Heart right ventricle (tissue), 16 donors: ENCODE measurements at regions of chr16 and their contacts with region 1.

Region 1: DNA sequence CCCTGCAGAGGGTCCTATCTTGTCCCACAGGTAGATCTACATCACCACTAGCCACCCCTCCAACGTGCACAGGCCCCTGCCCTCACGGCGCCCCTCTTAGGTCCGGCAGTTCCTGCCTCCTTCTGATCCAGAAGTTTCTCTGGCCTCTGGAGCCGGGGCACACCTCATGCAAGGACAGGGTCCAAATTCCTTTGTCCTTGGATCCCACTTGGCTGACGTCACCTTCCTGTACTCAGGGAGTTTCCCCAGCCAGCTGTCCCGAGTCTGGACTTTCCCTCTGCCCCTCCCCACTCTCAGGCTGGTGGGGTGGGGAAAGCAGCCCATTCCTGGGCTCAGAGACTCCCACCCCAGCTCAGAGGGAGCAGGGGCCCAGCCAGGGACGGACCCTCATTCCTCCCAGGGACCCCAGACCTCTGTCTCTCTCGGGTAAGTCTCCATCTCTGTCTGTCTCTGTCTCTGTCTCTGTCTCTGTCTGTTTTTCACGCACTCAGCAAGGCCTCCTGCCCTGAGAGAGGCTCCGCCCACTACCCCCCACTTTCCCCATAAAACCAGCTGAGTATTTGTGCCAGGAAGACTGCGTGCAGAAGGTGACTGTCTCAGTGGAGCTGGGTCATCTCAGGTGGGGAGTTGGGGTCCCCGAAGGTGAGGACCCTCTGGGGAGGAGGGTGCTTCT is at the start of gene IL32:
- DNase-seq: peak; percentile 54 to 88
- ATAC-seq: peak; percentile 70 to 94 (median 91)
- H3K4me3 ChIP-seq: peak within 1 kb of the TSS; percentile 1 to 71 (median 62)
- H3K27ac ChIP-seq: peak within 1 kb of the TSS; percentile 81 to 94 (median 88)
- H3K4me1 ChIP-seq: peaks cover 3 to 52% (median 14%) of the 10 kb centered on the region in 9 donors
- H3K27me3 ChIP-seq: no peaks in the 10 kb centered on the region
- CTCF ChIP-seq: no peak
- total RNA-seq, gene IL32: 23.4 to 204 (median 45.4) TPM

Region 2: DNA sequence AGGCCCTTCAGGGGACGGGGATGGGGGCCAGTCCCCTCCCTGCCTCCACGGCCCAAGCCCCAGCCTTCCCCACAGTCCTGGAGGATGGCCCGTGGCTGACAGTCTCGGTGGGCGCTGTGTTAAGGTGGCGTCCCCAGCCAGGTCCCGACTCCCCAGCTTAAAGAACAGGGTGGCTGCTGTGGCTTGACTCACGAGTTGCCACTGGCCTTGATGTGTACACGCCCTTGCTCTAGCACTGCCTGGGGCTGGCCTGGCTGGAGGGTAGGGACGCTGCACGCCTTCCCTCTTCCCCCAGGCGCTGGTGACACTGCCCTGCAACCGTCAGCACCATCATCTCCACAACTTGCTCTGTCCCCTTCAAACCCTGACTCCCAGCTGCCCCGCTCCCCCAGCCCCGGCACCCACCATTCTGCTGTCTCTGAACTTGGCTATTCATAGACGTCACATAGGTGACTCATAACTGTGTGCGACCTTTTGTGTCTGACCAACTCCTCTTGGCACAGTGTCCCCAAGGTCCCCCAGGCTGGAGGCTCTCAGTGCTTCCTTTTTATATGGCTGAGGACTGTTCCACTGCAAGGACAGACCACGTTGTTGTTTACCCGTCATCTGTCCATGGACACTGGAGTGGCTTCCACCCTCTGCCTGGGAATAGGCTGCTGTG is 1707.2 kb before region 1 on chr16:
- intact Hi-C with region 1: no loop called
- DNase-seq: no peak
- ATAC-seq: peak in 2 of 8 donors; percentile 18 to 44
- H3K4me3 ChIP-seq: no peak overlapping the region
- H3K27ac ChIP-seq: peak overlapping the region in 1 of 10 donors; percentile 8
- H3K4me1 ChIP-seq: peaks cover under 1 to 17% (median 9%) of the 10 kb centered on the region in 9 donors
- H3K27me3 ChIP-seq: no peaks in the 10 kb centered on the region
- CTCF ChIP-seq: no peak

Region 3: GRCh38 chr16:3021449-3022207 is 43.6 kb before region 1 on chr16:
- intact Hi-C with region 1: no loop called
- DNase-seq: peak; percentile 80 to 87
- ATAC-seq: peak; percentile 35 to 65 (median 54)
- H3K4me3 ChIP-seq: peak overlapping the region; percentile 47 to 87 (median 74)
- H3K27ac ChIP-seq: peak overlapping the region; percentile 82 to 100 (median 97)
- H3K4me1 ChIP-seq: peaks cover 23 to 69% (median 55%) of the 10 kb centered on the region in 9 donors
- H3K27me3 ChIP-seq: peaks cover 11 to 24% (median 20%) of the 10 kb centered on the region in 7 donors
- CTCF ChIP-seq: peak in 7 of 9 donors; percentile 28 to 64 (median 46)

Region 4: GRCh38 chr16:3087243-3088235 is 22.3 kb after region 1 on chr16:
- intact Hi-C with region 1: loop called in 1 of 10 experiments (anchors 2 kb)
- DNase-seq: peak; percentile 60 to 66
- ATAC-seq: peak; percentile 77 to 89 (median 82)
- H3K4me3 ChIP-seq: peak overlapping the region in 9 of 10 donors; percentile 18 to 60 (median 53)
- H3K27ac ChIP-seq: peak overlapping the region; percentile 82 to 96 (median 88)
- H3K4me1 ChIP-seq: peaks cover 0 to 42% (median 38%) of the 10 kb centered on the region in 9 donors
- H3K27me3 ChIP-seq: peaks cover 0 to 6% (median 0%) of the 10 kb centered on the region in 7 donors
- CTCF ChIP-seq: peak in 6 of 9 donors; percentile 2 to 49 (median 40)

Region 5: GRCh38 chr16:3099732-3100499 is 34.7 kb after region 1 on chr16:
- intact Hi-C with region 1: loop called in 5 of 10 experiments (anchors 5 kb)
- DNase-seq: peak; percentile 93 to 94
- ATAC-seq: peak; percentile 89 to 95 (median 94)
- H3K4me3 ChIP-seq: peak overlapping the region in 6 of 10 donors; percentile 11 to 43 (median 35)
- H3K27ac ChIP-seq: peak overlapping the region in 9 of 10 donors; percentile 49 to 90 (median 82)
- H3K4me1 ChIP-seq: peaks cover 6 to 55% (median 34%) of the 10 kb centered on the region in 9 donors
- H3K27me3 ChIP-seq: peaks cover 0 to 4% (median 0%) of the 10 kb centered on the region in 7 donors
- CTCF ChIP-seq: no peak

Region 6: DNA sequence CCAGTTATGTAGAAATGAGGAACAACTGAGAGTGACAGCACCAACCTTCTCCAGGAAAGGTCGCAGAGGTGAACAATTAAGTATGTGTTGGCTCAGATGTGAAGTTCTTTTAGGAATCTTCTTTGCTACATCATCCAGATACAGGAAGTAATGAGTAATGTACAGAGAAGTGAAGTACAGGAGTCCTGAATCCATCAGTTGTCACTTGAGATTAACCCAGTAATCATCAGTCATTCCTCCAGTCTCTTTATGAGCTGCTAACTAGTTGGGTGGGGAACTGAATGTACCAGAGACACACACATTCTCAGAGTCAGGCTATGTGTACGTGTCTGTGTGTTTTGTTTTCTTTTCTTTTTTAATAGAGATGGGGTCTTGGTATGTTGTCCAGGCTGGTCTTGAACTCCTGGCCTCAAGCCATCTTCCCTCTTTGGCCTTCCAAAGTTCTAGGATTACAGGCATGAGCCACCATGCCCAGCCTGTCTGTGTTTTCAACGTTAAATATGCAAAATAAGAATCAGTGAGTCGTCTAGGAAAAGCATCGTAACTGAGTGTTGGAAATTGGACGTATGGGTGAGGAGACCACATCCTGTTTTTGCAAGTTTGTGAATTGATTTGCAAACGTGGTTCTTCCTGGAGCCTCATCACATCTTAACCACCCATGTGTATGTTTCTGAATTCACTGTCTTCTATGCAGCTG is 149.8 kb after region 1 on chr16:
- intact Hi-C with region 1: no loop called
- DNase-seq: no peak
- ATAC-seq: no peak
- H3K4me3 ChIP-seq: no peak overlapping the region
- H3K27ac ChIP-seq: peak overlapping the region in 1 of 10 donors; percentile 69
- H3K4me1 ChIP-seq: peaks cover 0 to 6% (median 0%) of the 10 kb centered on the region in 9 donors
- H3K27me3 ChIP-seq: peaks cover 0 to 7% (median 0%) of the 10 kb centered on the region in 7 donors
- CTCF ChIP-seq: no peak